ENCODE measurements at regions of chr5 and their contacts with region 1.

Region 1: DNA sequence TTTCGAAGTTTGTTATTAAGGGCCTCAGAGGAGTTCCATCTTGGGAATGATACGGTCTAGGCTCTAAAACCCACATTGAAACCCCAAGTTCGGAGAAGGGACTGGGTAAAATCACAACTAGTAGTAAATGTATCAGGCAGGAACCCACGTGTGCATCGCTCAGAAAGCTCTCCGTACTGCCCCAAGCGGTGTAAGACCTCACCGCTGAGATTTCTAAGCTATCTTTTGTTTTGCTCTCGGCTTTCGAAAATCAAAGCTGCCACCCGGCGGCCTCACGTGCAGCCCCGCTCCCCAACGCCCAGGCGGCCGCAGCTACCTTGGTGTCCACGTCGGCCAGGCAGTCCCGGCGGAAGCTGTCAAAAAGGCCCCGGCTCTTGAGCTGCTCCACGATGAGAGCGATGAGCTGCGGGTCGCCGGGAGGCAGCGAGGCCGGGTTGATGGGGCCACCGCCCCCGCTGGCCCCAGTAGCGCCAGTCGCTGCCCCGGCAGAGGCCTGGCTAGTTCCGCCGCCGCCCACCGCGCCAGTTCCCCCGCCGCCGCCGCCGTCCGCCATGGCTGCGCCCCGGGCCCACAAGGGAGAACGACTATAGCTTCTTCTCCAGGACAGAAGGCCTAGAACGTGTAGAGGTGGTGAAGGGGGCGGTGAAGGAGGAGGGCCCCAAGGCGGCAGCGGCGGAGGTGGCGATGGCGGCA is 420 bp downstream of the BOD1 start:
- DNase-seq: peak; percentile 84
- ATAC-seq: peak; percentile 71
- H3K4me3 Mint-ChIP-seq: peak overlapping the region; percentile 91
- H3K27ac Mint-ChIP-seq: peak overlapping the region; percentile 87
- H3K4me1 Mint-ChIP-seq: peaks cover 30% of the 10 kb centered on the region
- H3K27me3 Mint-ChIP-seq: no peaks in the 10 kb centered on the region

Region 2: GRCh38 chr5:173714551-173715428 is 98.8 kb after region 1 on chr5:
- CTCF ChIA-PET with region 1: no interaction called
- POLR2A ChIA-PET with region 1: no interaction called
- DNase-seq: no peak
- ATAC-seq: no peak
- H3K4me3 Mint-ChIP-seq: no peak overlapping the region
- H3K27ac Mint-ChIP-seq: no peak overlapping the region
- H3K4me1 Mint-ChIP-seq: no peaks in the 10 kb centered on the region
- H3K27me3 Mint-ChIP-seq: no peaks in the 10 kb centered on the region

Region 3: DNA sequence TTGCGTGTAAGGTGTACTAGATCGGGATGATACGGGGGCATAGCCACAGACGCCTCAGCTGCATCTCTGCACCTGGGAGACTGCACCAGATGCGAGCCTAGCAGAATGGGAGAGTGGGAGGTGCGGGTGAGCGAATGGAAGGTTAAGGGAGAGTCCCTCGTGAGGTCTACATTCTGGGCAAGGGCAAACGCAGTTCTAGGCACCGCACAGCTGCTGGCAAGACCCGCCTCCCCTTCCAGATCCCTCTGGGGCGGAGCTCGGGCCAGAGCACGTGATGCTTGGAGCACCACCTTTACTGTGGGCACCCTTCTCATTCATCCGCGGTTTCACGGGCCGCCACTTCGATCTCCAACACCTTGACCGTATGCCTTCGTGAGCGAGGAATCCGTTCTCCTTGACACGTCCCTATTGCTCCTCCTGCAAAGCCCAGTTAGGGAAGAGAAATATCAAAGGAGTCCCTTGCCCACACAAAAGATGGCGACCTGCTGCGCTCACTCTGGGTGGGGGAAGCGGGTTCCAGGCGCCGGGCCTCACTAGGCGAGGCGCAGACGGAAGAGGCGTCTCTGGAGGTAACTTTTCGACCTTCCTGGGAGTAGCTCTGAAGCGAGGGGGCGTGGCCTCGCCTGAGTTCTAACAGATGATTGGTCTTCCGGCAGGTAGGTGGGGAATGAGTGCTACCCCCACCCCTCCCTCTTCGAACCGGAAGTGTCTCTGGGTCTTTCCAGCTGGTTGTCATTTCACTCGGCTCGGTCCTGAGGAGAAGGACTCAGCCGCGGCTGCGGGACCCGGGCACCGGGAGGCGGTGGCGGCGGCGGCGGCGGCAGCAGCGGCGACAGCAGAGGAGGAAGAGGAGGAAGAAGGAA is 271.8 kb after region 1 on chr5 and contains the start of gene CPEB4:
- CTCF ChIA-PET with region 1: interaction called, 12 read pairs
- POLR2A ChIA-PET with region 1: interaction called, 8 read pairs
- DNase-seq: peak; percentile 98
- ATAC-seq: peak; percentile 97
- H3K4me3 Mint-ChIP-seq: peak within 1 kb of the TSS; percentile 96
- H3K27ac Mint-ChIP-seq: peak within 1 kb of the TSS; percentile 97
- H3K4me1 Mint-ChIP-seq: peaks cover 76% of the 10 kb centered on the region
- H3K27me3 Mint-ChIP-seq: no peaks in the 10 kb centered on the region
- total RNA-seq, gene CPEB4: 10.5 to 12.3 TPM

Region 4: DNA sequence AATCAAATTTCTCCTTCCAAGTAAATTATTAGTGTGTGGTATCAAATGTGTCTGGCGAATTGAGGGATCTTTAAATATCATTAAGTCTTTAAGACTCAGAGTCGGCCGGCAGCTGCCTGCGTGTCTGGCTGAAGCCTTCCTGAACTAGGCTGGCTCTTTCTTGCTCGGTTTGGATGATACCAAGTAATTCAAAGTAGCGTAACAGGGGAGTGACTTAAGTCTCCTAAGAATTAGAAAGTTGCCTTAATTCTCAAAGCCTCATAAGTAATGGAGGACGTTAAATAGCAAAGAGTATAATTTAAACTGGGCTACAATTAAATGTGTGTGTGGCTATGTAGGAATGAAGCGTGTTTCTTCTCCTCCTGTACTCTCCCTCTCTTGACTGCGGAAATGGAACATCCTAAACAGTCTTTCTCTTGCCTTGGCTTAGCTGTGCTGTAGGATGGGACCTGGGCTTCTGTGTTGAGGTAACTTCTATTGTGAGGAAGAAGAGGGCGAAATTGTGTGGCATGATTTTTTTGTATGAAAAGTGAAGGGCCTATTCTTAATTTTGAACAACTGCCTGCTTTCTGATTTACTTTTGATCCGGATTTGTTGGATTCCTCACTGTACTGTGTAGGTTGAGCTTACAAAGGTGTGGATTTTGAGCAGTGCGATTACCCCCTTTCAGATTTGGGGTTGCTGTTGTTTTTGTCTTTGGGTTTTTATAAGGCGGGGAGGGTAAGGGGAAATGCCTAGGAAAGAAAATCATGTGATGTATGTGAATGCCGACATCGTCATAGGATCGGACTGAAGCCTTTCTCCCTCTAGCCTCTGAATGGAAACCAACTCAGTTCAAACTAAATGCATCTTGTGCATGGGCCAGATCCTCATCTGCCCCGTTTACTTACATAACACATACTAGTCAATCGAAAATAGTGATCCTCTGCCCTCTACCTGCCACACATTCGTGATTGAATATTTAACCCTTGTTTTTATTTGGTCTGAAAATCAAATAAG is 302.1 kb after region 1 on chr5:
- CTCF ChIA-PET with region 1: interaction called, 19 read pairs
- POLR2A ChIA-PET with region 1: interaction called, 3 read pairs
- DNase-seq: peak; percentile 69
- ATAC-seq: peak; percentile 97
- H3K4me3 Mint-ChIP-seq: no peak overlapping the region
- H3K27ac Mint-ChIP-seq: no peak overlapping the region
- H3K4me1 Mint-ChIP-seq: peaks cover 6% of the 10 kb centered on the region
- H3K27me3 Mint-ChIP-seq: no peaks in the 10 kb centered on the region

Region 5: DNA sequence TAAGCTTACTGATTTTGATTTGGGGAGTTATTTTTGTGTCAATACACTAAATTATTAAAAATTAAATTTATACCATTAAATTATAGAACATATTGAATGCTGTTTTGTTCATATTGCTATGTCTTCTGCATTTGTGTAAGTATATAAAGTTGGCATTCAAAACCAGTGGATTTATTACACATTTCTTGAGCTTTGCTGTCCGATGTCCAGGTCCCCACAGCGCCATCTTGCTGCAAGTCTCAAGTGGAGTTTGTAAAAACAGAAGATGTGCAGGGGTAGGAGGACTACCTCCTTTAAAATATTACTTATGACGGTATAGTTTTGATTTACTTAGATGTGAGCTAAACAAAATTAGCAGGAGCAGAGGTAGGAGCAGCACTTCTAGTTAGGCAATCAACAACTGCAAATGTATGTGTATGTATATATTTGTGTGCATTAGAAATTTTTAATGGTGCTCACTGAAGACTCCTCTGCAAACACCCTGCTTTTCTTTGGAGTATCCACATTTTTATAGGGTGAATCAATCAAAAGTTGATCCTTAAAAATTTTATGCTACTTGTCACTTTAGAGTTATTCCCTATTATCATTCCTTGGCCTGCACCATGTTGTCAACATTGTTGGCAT is 309.5 kb after region 1 on chr5:
- CTCF ChIA-PET with region 1: interaction called, 18 read pairs
- POLR2A ChIA-PET with region 1: no interaction called
- DNase-seq: peak; percentile 58
- ATAC-seq: no peak
- H3K4me3 Mint-ChIP-seq: no peak overlapping the region
- H3K27ac Mint-ChIP-seq: no peak overlapping the region
- H3K4me1 Mint-ChIP-seq: peaks cover 6% of the 10 kb centered on the region
- H3K27me3 Mint-ChIP-seq: no peaks in the 10 kb centered on the region

Region 6: GRCh38 chr5:173972925-173973615 is 357.0 kb after region 1 on chr5:
- CTCF ChIA-PET with region 1: interaction called, 41 read pairs
- POLR2A ChIA-PET with region 1: no interaction called
- DNase-seq: peak; percentile 83
- ATAC-seq: peak; percentile 84
- H3K4me3 Mint-ChIP-seq: peak overlapping the region; percentile 67
- H3K27ac Mint-ChIP-seq: no peak overlapping the region
- H3K4me1 Mint-ChIP-seq: peaks cover 3% of the 10 kb centered on the region
- H3K27me3 Mint-ChIP-seq: peaks cover 33% of the 10 kb centered on the region

Region 7: GRCh38 chr5:174311531-174312269 is 695.7 kb after region 1 on chr5:
- CTCF ChIA-PET with region 1: interaction called, 15 read pairs
- POLR2A ChIA-PET with region 1: no interaction called
- DNase-seq: peak; percentile 67
- ATAC-seq: peak; percentile 77
- H3K4me3 Mint-ChIP-seq: no peak overlapping the region
- H3K27ac Mint-ChIP-seq: no peak overlapping the region
- H3K4me1 Mint-ChIP-seq: no peaks in the 10 kb centered on the region
- H3K27me3 Mint-ChIP-seq: peaks cover 11% of the 10 kb centered on the region

Measured in activated CD8-positive, alpha-beta T cell treated with anti-CD3 and anti-CD28 coated beads, Interleukin-2, amount 10 ng/mL, durations not matched to agents 7 days and 5 days (primary cell).